Activated CD8-positive, alpha-beta T cell treated with anti-CD3 and anti-CD28 coated beads, Interleukin-2, amount 10 ng/mL, durations not matched to agents 7 days and 5 days (primary cell): ENCODE measurements at regions of chr5 and their contacts with region 1.

Region 1: DNA sequence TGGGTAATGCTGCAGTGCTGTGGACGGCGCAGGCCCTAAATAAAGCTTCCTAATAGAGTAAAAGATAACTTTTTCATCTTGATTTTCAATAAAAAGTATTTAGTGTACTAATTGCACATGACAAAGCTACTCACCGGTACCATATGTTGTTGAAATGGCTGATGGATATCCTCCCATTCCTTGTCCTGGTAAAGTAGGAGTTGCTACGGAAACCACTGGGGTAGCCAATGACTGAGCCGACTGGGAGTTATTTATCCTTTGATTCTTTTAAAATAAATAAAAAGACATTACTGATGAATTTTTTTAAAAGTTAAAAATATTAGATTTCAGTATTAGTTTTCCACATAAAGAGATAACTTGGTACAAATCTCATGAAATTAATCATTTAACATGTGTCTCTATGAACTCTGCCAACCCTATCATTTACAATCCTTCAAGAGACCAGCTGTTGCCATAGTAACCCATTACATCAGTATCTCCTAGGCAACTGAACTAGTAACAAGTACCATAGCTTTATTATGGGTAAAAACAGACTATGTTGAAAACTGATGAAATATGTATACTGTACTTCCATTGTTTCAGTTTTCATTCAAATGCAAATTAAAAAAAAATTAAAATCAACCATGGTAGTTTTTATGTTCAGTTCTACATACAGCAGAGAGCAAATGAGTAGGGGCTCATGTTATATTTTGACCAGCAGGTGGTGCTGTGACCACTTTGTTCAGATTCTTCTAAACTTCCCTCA is 153.7 kb downstream of the MEF2C start:
- DNase-seq: peak; percentile 74
- ATAC-seq: peak; percentile 75
- H3K4me3 Mint-ChIP-seq: no peak overlapping the region
- H3K27ac Mint-ChIP-seq: no peak overlapping the region
- H3K4me1 Mint-ChIP-seq: peaks cover 5% of the 10 kb centered on the region
- H3K27me3 Mint-ChIP-seq: peaks cover 7% of the 10 kb centered on the region

Region 2: DNA sequence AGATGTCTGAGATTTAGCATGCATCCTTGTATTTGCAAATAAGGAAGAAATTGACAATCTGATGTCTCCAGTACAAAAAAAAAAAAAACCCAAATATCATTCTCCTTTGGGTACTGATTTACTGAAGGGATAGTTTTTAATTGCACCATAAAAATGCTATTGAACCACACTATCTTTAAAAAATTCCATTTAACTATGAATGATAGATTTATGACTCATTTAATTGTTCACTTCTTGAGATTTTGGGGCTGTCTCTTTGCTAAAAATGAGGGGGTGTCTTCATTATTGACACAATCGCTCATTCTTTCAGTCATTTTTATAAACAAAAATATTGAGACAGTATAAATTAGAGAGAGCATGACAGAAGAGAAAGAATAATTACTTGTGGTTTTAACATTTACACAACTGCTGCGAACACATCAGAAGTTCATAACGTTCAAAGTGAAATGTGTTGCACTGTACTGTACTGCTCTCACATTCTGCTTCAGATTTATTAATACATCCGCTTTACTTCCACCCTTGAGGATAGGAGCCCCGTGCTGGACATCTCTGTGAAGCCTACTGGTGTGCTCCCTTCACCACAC is 11.4 kb after region 1 on chr5:
- CTCF ChIA-PET with region 1: interaction called, 28 read pairs
- POLR2A ChIA-PET with region 1: no interaction called
- DNase-seq: no peak
- ATAC-seq: no peak
- H3K4me3 Mint-ChIP-seq: no peak overlapping the region
- H3K27ac Mint-ChIP-seq: no peak overlapping the region
- H3K4me1 Mint-ChIP-seq: no peaks in the 10 kb centered on the region
- H3K27me3 Mint-ChIP-seq: peaks cover 15% of the 10 kb centered on the region

Region 3: GRCh38 chr5:88778736-88779135 is 49.5 kb after region 1 on chr5:
- CTCF ChIA-PET with region 1: no interaction called
- POLR2A ChIA-PET with region 1: no interaction called
- DNase-seq: no peak
- ATAC-seq: no peak
- H3K4me3 Mint-ChIP-seq: no peak overlapping the region
- H3K27ac Mint-ChIP-seq: no peak overlapping the region
- H3K4me1 Mint-ChIP-seq: no peaks in the 10 kb centered on the region
- H3K27me3 Mint-ChIP-seq: no peaks in the 10 kb centered on the region

Region 4: DNA sequence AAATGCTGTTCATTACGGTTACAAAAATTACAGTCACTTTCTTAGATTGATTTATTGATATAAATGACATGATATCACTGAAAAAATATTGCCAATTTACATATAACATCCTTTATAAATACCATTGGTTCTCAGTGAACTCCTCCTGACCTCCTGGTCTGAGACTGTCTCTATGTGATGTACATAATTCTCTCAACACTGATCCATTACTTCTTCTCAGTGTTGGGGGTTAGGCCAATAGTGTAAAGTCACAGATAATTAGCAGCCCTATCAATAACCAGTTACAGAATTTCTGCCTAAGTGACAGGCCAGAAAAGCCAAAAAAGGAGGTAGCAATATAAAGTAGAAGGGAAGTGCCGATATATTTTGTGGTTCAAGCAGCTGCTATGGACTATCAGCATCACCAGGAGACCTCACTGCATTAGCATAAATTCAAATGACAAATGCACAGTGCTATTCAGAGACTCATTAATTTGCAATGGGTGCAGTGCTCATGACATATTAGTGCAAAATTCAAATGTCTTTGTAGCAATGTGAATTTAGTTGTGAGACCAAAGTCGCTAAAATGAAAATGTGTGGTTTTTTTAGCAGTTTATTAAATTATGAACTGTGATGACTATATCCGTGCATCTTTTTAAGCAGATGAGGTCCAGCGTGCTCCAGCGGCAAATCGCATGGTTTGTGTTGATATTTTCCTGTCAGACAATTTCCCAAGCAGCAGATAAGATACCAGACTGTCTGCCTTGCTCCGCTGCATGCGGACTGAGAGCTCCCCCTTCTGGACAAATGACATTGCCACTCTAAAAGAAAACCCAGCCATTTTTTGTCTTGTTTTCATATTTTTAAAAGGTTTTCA is 1535.7 kb after region 1 on chr5:
- CTCF ChIA-PET with region 1: interaction called, 62 read pairs
- POLR2A ChIA-PET with region 1: interaction called, 3 read pairs
- DNase-seq: peak; percentile 60
- ATAC-seq: peak; percentile 57
- H3K4me3 Mint-ChIP-seq: no peak overlapping the region
- H3K27ac Mint-ChIP-seq: no peak overlapping the region
- H3K4me1 Mint-ChIP-seq: no peaks in the 10 kb centered on the region
- H3K27me3 Mint-ChIP-seq: peaks cover 4% of the 10 kb centered on the region